Transverse colon (tissue), 4 donors: ENCODE measurements at regions of chr5 and their contacts with region 1.

Region 1: GRCh38 chr5:23103566-23103965 is 250.4 kb upstream of the CDH12 start:
- DNase-seq: no peak
- H3K4me3 ChIP-seq: no peak overlapping the region
- H3K27ac ChIP-seq: no peak overlapping the region
- H3K4me1 ChIP-seq: no peaks in the 10 kb centered on the region
- H3K27me3 ChIP-seq: no peaks in the 10 kb centered on the region
- CTCF ChIP-seq: no peak
- EP300 ChIP-seq: no peak
- POLR2A ChIP-seq: no peak

Region 2: DNA sequence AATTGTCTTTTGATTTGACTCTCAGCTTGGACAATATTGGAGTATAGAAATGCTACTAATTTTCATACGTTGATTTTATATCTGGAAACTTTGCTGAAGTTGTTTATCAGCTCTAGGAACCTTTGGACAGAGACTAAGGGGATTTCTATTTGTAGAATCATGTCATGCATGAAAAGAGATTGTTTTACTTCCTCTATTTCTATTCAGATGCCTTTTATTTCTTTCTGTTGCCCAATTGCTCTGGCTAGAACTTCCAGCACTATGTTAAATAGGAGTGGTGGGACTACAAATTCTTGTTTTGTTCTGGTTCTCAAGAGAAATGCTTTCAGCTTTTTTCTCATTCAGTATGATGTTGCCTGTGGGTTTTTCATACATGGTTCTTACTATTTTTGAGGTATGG is 137.6 kb before region 1 on chr5:
- in situ Hi-C with region 1: no loop called
- intact Hi-C with region 1: no loop called
- DNase-seq: no peak
- H3K4me3 ChIP-seq: no peak overlapping the region
- H3K27ac ChIP-seq: no peak overlapping the region
- H3K4me1 ChIP-seq: no peaks in the 10 kb centered on the region
- H3K27me3 ChIP-seq: no peaks in the 10 kb centered on the region
- CTCF ChIP-seq: no peak
- EP300 ChIP-seq: no peak
- POLR2A ChIP-seq: no peak

Region 3: GRCh38 chr5:23147625-23148024 is 44.1 kb after region 1 on chr5:
- in situ Hi-C with region 1: no loop called
- intact Hi-C with region 1: loop called (anchors 1 kb)
- DNase-seq: no peak
- H3K4me3 ChIP-seq: no peak overlapping the region
- H3K27ac ChIP-seq: no peak overlapping the region
- H3K4me1 ChIP-seq: no peaks in the 10 kb centered on the region
- H3K27me3 ChIP-seq: no peaks in the 10 kb centered on the region
- CTCF ChIP-seq: no peak
- EP300 ChIP-seq: no peak
- POLR2A ChIP-seq: no peak